ENCODE measurements at regions of chr4 and their contacts with region 1.

Region 1: DNA sequence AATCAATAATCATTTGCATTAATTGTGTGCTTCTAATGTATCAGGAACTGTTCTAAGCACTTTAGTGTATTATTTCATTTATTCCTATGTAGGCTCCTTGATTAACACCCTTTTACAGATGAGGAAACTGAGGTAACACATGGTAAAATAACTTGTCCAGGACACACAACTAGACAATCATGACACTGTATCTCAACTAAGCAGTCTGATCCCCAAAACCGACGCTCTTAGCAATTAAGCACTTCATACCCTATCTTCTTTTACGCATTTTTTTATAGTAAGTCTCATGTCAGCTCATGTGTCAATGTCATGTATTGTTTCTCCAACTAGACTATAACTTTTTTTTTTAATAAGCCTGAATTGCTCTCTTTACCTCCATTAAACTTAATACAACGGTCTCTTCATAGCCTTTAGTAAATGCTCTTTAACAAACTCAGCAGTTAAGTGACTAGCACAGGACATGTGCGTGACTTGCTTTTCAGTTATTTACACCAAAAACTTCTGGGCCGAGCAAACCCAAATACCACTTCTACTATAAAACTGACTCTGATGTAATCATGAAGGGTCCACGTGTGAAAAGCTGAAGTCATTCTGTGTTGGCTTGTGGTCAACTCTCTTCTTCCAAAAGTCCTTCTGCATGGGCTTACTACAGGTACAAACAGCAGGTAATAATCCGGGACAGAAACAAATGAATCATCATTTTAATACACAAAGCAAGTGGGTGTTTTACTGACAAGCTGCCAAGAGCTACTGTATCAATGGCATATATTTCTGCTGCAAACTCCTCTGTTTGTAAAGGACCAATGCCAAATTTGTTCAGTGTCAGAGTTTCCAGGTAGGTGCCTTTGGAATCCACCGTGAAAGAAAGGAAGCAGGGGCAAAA is 7.9 kb upstream of the AMBN start:
- DNase-seq: peak; percentile 100
- ATAC-seq: peak; percentile 89
- H3K4me3 ChIP-seq: no peak overlapping the region
- H3K27ac ChIP-seq: peak overlapping the region; percentile 56
- H3K4me1 ChIP-seq: peaks cover 16% of the 10 kb centered on the region
- H3K27me3 ChIP-seq: no peaks in the 10 kb centered on the region
- CTCF ChIP-seq: no peak

Region 2: GRCh38 chr4:70594196-70594595 is 10.0 kb after region 1 on chr4:
- CTCF ChIA-PET with region 1: no interaction called
- POLR2A ChIA-PET with region 1: interaction called, 12 read pairs
- intact Hi-C with region 1: no loop called
- DNase-seq: no peak
- ATAC-seq: no peak
- H3K4me3 ChIP-seq: no peak overlapping the region
- H3K27ac ChIP-seq: no peak overlapping the region
- H3K4me1 ChIP-seq: no peaks in the 10 kb centered on the region
- H3K27me3 ChIP-seq: 0 out of 2 replicates have a peak, but pooled peaks cover 4% of the 10 kb centered on the region
- CTCF ChIP-seq: no peak

Region 3: DNA sequence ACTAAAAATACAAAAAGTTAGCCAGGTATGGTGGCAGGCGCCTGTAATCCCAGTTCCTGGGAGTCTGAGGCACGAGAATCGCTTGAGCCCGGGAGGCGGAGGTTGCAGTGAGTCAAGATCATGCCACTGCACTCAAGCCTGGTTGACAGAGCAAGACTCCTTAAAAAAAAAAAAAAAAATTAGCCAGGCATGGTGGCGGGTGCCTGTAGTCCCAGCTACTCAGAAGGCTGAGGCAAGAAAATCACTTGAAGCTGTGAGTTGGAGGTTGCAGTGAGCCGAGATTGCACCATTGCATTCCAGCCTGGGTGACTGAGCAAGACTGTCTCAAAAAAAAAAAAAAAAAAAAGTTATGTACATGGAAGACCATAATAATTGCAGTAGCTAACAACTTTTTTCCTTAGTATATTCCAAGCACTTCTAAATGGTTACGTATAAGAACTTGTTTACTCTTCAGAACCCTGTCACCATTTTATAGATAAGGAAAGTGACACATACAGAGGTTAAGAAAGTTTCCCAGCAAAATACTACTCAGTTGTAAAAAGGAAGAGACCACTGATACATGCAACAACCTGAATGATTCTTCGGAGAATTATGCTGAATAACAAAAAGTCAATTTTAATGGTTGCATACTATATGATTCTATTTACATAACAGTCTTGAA is 162.1 kb after region 1 on chr4:
- CTCF ChIA-PET with region 1: no interaction called
- POLR2A ChIA-PET with region 1: no interaction called
- intact Hi-C with region 1: no loop called
- DNase-seq: no peak
- ATAC-seq: no peak
- H3K4me3 ChIP-seq: no peak overlapping the region
- H3K27ac ChIP-seq: no peak overlapping the region
- H3K4me1 ChIP-seq: 0 out of 2 replicates have a peak, but pooled peaks cover 4% of the 10 kb centered on the region
- H3K27me3 ChIP-seq: no peaks in the 10 kb centered on the region
- CTCF ChIP-seq: no peak